ENCODE measurements at regions of chr16 and their contacts with region 1.

Region 1: GRCh38 chr16:79770244-79771064 is 169.9 kb upstream of the MAF start:
- DNase-seq: peak; percentile 88
- ATAC-seq: peak; percentile 100
- H3K4me3 Mint-ChIP-seq: peak overlapping the region; percentile 77
- H3K27ac Mint-ChIP-seq: peak overlapping the region; percentile 83
- H3K4me1 Mint-ChIP-seq: peaks cover 13% of the 10 kb centered on the region
- H3K27me3 Mint-ChIP-seq: peaks cover 3% of the 10 kb centered on the region

Region 2: GRCh38 chr16:79089735-79090284 is 680.6 kb before region 1 on chr16:
- CTCF ChIA-PET with region 1: no interaction called
- POLR2A ChIA-PET with region 1: no interaction called
- intact Hi-C with region 1: loop called in 1 of 2 experiments (anchors 10 kb)
- DNase-seq: peak; percentile 82
- ATAC-seq: peak; percentile 70
- H3K4me3 Mint-ChIP-seq: peak overlapping the region; percentile 66
- H3K27ac Mint-ChIP-seq: peak overlapping the region; percentile 95
- H3K4me1 Mint-ChIP-seq: peaks cover 57% of the 10 kb centered on the region
- H3K27me3 Mint-ChIP-seq: no peaks in the 10 kb centered on the region

Region 3: DNA sequence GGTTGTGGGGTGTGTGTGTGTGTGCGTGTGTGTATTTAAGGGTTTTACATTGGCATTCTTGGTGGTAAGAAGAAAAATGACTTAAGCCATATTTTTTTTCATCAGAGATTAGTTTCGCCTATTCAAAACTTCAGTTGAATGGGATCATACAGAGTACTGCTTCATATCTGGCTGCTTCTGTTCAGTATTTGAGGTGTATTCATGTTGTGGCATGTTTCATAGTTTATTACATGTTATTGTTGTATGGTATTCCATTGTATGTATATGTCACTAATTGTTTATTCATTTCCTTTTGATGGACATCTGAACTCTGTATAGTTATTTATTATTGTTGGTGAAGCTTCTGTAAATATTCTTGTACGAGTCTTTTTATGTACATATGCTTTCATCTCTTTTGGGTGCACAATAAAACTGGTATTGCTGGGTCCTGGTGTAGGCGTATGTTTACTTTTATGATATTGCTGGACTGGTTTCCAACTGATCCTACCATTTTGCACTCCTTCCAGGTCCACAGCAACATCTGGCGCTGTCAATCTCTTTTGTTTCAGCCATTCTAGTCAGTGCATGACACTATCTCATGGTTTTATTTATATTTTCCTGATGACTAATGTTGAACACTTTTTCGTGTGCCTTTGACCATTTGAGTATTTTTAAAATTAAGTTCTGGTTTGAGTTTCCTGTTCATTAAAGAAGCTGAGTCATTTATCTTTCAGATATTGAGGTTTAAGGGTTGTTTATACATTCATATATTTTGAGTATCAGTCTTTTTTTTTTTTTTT is 92.5 kb before region 1 on chr16:
- CTCF ChIA-PET with region 1: no interaction called
- POLR2A ChIA-PET with region 1: no interaction called
- intact Hi-C with region 1: no loop called
- DNase-seq: no peak
- ATAC-seq: no peak
- H3K4me3 Mint-ChIP-seq: no peak overlapping the region
- H3K27ac Mint-ChIP-seq: no peak overlapping the region
- H3K4me1 Mint-ChIP-seq: no peaks in the 10 kb centered on the region
- H3K27me3 Mint-ChIP-seq: no peaks in the 10 kb centered on the region

Region 4: GRCh38 chr16:79826732-79827475 is 56.5 kb after region 1 on chr16:
- CTCF ChIA-PET with region 1: no interaction called
- POLR2A ChIA-PET with region 1: no interaction called
- intact Hi-C with region 1: no loop called
- DNase-seq: no peak
- ATAC-seq: no peak
- H3K4me3 Mint-ChIP-seq: no peak overlapping the region
- H3K27ac Mint-ChIP-seq: no peak overlapping the region
- H3K4me1 Mint-ChIP-seq: no peaks in the 10 kb centered on the region
- H3K27me3 Mint-ChIP-seq: peaks cover 9% of the 10 kb centered on the region

Region 5: GRCh38 chr16:79849119-79849518 is 78.7 kb after region 1 on chr16:
- CTCF ChIA-PET with region 1: no interaction called
- POLR2A ChIA-PET with region 1: no interaction called
- intact Hi-C with region 1: no loop called
- DNase-seq: no peak
- ATAC-seq: no peak
- H3K4me3 Mint-ChIP-seq: no peak overlapping the region
- H3K27ac Mint-ChIP-seq: no peak overlapping the region
- H3K4me1 Mint-ChIP-seq: peaks cover 20% of the 10 kb centered on the region
- H3K27me3 Mint-ChIP-seq: peaks cover 10% of the 10 kb centered on the region

Region 6: GRCh38 chr16:79902351-79902750 is 131.9 kb after region 1 on chr16:
- CTCF ChIA-PET with region 1: no interaction called
- POLR2A ChIA-PET with region 1: no interaction called
- intact Hi-C with region 1: no loop called
- DNase-seq: no peak
- ATAC-seq: no peak
- H3K4me3 Mint-ChIP-seq: no peak overlapping the region
- H3K27ac Mint-ChIP-seq: no peak overlapping the region
- H3K4me1 Mint-ChIP-seq: no peaks in the 10 kb centered on the region
- H3K27me3 Mint-ChIP-seq: peaks cover 2% of the 10 kb centered on the region